Caco-2 (cell line): ENCODE measurements at regions of chr13 and their contacts with region 1.

Region 1: GRCh38 chr13:107211073-107211472 is 643.1 kb upstream of the ARGLU1 start:
- DNase-seq: peak; percentile 79 to 81
- H3K4me3 ChIP-seq: no peak overlapping the region
- H3K4me3 Mint-ChIP-seq: no peak overlapping the region
- H3K27ac Mint-ChIP-seq: no peak overlapping the region
- H3K4me1 ChIP-seq: no peaks in the 10 kb centered on the region
- H3K4me1 Mint-ChIP-seq: peaks cover 12% of the 10 kb centered on the region
- H3K27me3 ChIP-seq: 0 out of 2 replicates have a peak, but pooled peaks cover 2% of the 10 kb centered on the region
- H3K27me3 Mint-ChIP-seq: peaks cover 16% of the 10 kb centered on the region
- CTCF ChIP-seq: peak; percentile 86 to 97

Region 2: DNA sequence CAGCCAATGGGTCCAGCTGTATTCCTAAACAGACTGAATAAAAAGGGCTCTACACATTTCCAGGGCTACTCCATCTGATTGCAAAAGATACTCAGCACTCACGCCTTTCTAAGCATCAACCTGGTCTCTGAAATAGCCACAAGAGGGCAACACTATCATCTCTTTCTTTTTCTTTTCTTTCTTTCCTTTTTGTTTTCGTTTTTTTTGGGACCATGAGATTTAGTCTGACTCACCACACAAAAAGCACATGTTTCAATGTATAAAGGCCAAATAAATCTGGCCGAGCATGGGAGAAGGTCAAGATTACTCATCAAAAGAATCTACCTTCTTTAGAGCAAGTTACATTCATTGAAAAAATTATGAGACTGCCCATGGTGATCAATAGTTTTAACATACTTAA is 162.5 kb after region 1 on chr13:
- CTCF ChIA-PET with region 1: no interaction called
- POLR2A ChIA-PET with region 1: no interaction called
- intact Hi-C with region 1: loop called (anchors 2 kb)
- DNase-seq: peak in 1 of 2 experiments; percentile 11
- H3K4me3 ChIP-seq: no peak overlapping the region
- H3K4me3 Mint-ChIP-seq: no peak overlapping the region
- H3K27ac Mint-ChIP-seq: no peak overlapping the region
- H3K4me1 ChIP-seq: no peaks in the 10 kb centered on the region
- H3K4me1 Mint-ChIP-seq: no peaks in the 10 kb centered on the region
- H3K27me3 ChIP-seq: no peaks in the 10 kb centered on the region
- H3K27me3 Mint-ChIP-seq: peaks cover 14% of the 10 kb centered on the region
- CTCF ChIP-seq: peak; percentile 44 to 74

Region 3: DNA sequence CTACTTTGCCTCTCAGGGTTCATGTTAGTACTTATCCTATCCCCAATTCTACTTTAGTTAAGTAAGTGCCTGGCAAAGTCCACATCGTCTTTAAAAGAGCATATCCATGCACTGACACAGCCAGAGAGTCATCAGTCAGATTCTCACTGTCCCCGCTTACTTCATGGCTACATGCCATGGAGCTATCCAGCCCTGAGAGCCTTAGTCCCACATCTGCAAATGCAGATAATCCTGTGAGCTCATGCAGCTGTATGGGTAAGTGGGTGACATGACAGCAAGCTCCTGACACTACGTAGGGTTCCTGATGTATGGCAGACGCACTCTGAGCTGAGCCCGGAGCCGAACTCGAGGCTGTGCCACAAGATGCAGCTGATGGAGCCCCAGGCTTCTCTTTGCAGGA is 342.8 kb after region 1 on chr13:
- CTCF ChIA-PET with region 1: no interaction called
- POLR2A ChIA-PET with region 1: no interaction called
- intact Hi-C with region 1: loop called (anchors 5 kb)
- DNase-seq: no peak
- H3K4me3 ChIP-seq: no peak overlapping the region
- H3K4me3 Mint-ChIP-seq: no peak overlapping the region
- H3K27ac Mint-ChIP-seq: no peak overlapping the region
- H3K4me1 ChIP-seq: no peaks in the 10 kb centered on the region
- H3K4me1 Mint-ChIP-seq: no peaks in the 10 kb centered on the region
- H3K27me3 ChIP-seq: no peaks in the 10 kb centered on the region
- H3K27me3 Mint-ChIP-seq: peaks cover 3% of the 10 kb centered on the region
- CTCF ChIP-seq: no peak

Region 4: GRCh38 chr13:107650081-107650701 is 439.1 kb after region 1 on chr13:
- CTCF ChIA-PET with region 1: no interaction called
- POLR2A ChIA-PET with region 1: no interaction called
- intact Hi-C with region 1: loop called (anchors 1 kb)
- DNase-seq: peak; percentile 64 to 76
- H3K4me3 ChIP-seq: no peak overlapping the region
- H3K4me3 Mint-ChIP-seq: no peak overlapping the region
- H3K27ac Mint-ChIP-seq: no peak overlapping the region
- H3K4me1 ChIP-seq: no peaks in the 10 kb centered on the region
- H3K4me1 Mint-ChIP-seq: no peaks in the 10 kb centered on the region
- H3K27me3 ChIP-seq: no peaks in the 10 kb centered on the region
- H3K27me3 Mint-ChIP-seq: peaks cover 14% of the 10 kb centered on the region
- CTCF ChIP-seq: peak; percentile 92 to 99